Heart right ventricle (tissue), 16 donors: ENCODE measurements at regions of chr12 and their contacts with region 1.

Region 1: DNA sequence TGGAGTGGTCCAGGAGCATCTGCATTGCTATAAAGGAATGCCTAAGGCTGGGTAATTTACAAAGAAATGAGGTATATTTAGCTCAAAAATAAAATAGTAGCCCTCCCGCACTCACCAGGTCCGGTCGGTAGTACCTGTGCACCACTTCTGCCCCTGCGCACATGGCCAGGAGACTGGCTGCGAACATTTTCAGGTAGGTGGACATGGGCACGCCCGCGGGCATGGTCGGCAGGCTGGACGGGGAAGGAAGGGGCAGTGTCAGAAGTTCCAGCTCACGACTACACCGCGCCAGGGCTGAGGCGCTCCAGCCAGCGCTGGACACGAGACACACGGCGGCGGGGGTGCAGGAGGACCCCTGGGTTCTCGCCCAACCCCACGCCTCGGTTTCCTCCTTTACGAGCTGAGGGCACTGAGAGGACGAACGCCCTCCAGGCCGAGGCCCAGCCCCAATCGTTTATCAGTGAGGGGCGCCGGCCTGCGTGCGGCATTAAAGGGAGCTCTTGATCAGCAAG is 9.1 kb upstream of the TDG start:
- DNase-seq: no peak
- ATAC-seq: peak; percentile 35 to 79 (median 55)
- H3K4me3 ChIP-seq: peak overlapping the region; percentile 68 to 97 (median 88)
- H3K27ac ChIP-seq: peak overlapping the region; percentile 86 to 97 (median 95)
- H3K4me1 ChIP-seq: peaks cover 3 to 36% (median 21%) of the 10 kb centered on the region in 9 donors
- H3K27me3 ChIP-seq: no peaks in the 10 kb centered on the region
- CTCF ChIP-seq: no peak

Region 2: GRCh38 chr12:103908866-103909265 is 47.7 kb before region 1 on chr12:
- intact Hi-C with region 1: no loop called
- DNase-seq: no peak
- ATAC-seq: no peak
- H3K4me3 ChIP-seq: no peak overlapping the region
- H3K27ac ChIP-seq: no peak overlapping the region
- H3K4me1 ChIP-seq: no peaks in the 10 kb centered on the region
- H3K27me3 ChIP-seq: no peaks in the 10 kb centered on the region
- CTCF ChIP-seq: no peak

Region 3: GRCh38 chr12:103930034-103930786 is 26.4 kb before region 1 on chr12 and contains the start of gene HSP90B1:
- intact Hi-C with region 1: loop called in 3 of 10 experiments (anchors 1 to 2 kb)
- DNase-seq: peak; percentile 98 to 100
- ATAC-seq: peak; percentile 91 to 95 (median 94)
- H3K4me3 ChIP-seq: peak within 1 kb of the TSS; percentile 61 to 95 (median 78)
- H3K27ac ChIP-seq: peak within 1 kb of the TSS; percentile 88 to 98 (median 94)
- H3K4me1 ChIP-seq: peaks cover 5 to 61% (median 50%) of the 10 kb centered on the region in 9 donors
- H3K27me3 ChIP-seq: no peaks in the 10 kb centered on the region
- CTCF ChIP-seq: no peak
- total RNA-seq, gene HSP90B1: 235 to 487 (median 297) TPM

Region 4: GRCh38 chr12:104026841-104027599 is 70.4 kb after region 1 on chr12:
- intact Hi-C with region 1: no loop called
- DNase-seq: no peak
- ATAC-seq: peak in 6 of 8 donors; percentile 46 to 85 (median 60)
- H3K4me3 ChIP-seq: no peak overlapping the region
- H3K27ac ChIP-seq: peak overlapping the region in 1 of 10 donors; percentile 23
- H3K4me1 ChIP-seq: peaks cover 0 to 18% (median 0%) of the 10 kb centered on the region in 9 donors
- H3K27me3 ChIP-seq: no peaks in the 10 kb centered on the region
- CTCF ChIP-seq: no peak

Region 5: DNA sequence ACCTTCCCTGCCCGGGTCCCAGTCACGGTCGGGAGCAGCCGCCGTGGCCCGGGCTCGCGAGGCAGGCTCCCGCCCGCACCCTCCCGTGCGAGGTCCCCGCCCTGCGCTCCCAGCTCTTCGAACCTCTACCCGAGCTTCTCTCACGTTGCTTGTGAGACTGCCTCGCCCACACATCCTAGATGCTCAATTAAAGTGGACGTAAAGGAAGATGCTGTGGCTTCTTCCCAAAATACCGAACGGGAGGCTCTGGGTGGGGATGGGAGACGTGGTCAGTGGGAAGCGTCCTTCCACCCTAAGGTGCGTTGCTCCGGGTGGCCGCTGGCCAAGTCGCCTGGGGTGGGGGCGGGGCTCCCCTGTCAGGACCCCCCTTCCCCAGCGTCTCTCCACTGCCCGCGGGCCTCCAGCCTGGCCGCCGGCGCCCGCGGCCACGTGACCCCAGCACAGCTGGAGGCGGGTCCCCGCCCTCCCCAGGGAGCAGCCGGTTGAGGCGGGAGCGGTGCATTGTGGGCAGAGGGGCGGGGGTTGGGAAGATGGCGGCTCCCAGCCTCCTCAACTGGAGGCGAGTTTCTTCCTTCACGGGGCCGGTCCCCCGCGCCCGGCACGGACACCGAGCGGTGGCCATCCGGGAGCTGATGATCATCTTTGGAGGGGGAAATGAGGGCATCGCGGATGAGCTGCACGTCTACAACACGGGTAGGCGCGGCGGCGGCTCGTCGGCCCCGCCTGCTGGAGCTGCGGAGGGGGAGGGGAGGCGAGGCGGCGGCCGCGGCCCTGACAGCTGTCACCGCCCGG is 107.7 kb after region 1 on chr12 and contains the start of gene HCFC2:
- intact Hi-C with region 1: loop called in 4 of 10 experiments (anchors 2 to 10 kb)
- DNase-seq: peak; percentile 94
- ATAC-seq: peak; percentile 99
- H3K4me3 ChIP-seq: peak within 1 kb of the TSS; percentile 67 to 98 (median 93)
- H3K27ac ChIP-seq: peak within 1 kb of the TSS; percentile 75 to 97 (median 94)
- H3K4me1 ChIP-seq: peaks cover 0 to 41% (median 29%) of the 10 kb centered on the region in 9 donors
- H3K27me3 ChIP-seq: no peaks in the 10 kb centered on the region
- CTCF ChIP-seq: peak in 1 of 9 donors; percentile 15
- total RNA-seq, gene HCFC2: 8.6 to 13.6 (median 11.3) TPM

Region 6: GRCh38 chr12:104090687-104091086 is 134.1 kb after region 1 on chr12:
- intact Hi-C with region 1: loop called in 1 of 10 experiments (anchors 10 kb)
- DNase-seq: no peak
- ATAC-seq: no peak
- H3K4me3 ChIP-seq: no peak overlapping the region
- H3K27ac ChIP-seq: no peak overlapping the region
- H3K4me1 ChIP-seq: no peaks in the 10 kb centered on the region
- H3K27me3 ChIP-seq: no peaks in the 10 kb centered on the region
- CTCF ChIP-seq: no peak